ENCODE measurements at regions of chr1 and their contacts with region 1.

Region 1: DNA sequence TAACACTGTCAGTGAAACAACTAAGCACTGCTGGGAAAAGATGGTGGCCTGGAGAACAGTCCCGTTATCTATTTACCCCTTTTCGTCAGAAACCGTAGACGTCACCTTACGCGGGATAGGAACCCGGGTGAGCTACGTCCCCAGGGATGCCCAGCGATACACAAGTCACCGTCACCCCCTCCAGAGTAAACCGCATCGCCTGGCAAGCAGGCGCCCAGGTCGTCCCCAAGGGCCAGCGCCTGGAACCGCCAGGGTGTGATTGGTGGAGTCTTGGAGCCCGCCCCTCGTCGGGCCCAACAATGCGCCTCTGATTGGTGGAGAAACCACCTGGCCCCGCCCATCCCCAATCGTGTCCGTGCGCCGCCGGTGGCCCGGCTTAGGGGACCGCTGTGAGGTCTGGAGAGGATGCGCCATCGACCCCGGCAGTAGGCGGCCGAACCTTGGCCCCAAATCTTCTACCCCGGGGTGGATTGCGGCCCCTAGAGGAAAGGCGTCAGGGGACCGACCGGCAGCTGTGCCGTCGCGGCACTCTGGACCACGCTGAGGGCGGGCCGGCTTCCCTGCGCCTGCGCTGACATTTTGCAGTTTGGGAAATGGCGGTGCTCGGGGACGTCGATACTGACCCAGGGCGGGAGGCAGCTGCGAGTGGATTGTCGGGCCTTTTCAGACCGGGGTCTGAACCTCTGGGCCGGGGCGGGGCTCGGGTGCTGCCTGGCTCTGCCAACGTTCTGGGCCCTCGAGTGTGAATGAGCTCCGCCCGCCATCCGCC is 34.4 kb downstream of the SLC2A1 start:
- ATAC-seq: peak; percentile 73 to 95 (median 92)
- H3K4me3 ChIP-seq: peak overlapping the region; percentile 51 to 68 (median 52)
- H3K27ac ChIP-seq: peak overlapping the region; percentile 93 to 96
- H3K4me1 ChIP-seq: peaks cover 16 to 19% of the 10 kb centered on the region in 2 donors

Region 2: GRCh38 chr1:43067977-43068751 is 143.9 kb after region 1 on chr1:
- in situ Hi-C with region 1: loop called in 7 of 9 experiments (anchors 10 to 25 kb)
- ATAC-seq: peak in 5 of 8 experiments; percentile 46 to 63 (median 60)
- H3K4me3 ChIP-seq: peak overlapping the region in 2 of 5 donors; percentile 2 to 13
- H3K27ac ChIP-seq: peak overlapping the region in 1 of 2 donors; percentile 65
- H3K4me1 ChIP-seq: peaks cover 29 to 37% of the 10 kb centered on the region in 2 donors

Measured in motor neuron (in vitro differentiated cells).